Activated CD4-positive, alpha-beta T cell treated with anti-CD3 and anti-CD28 coated beads for 36 hours (primary cell): ENCODE measurements at regions of chr7 and their contacts with region 1.

Region 1: DNA sequence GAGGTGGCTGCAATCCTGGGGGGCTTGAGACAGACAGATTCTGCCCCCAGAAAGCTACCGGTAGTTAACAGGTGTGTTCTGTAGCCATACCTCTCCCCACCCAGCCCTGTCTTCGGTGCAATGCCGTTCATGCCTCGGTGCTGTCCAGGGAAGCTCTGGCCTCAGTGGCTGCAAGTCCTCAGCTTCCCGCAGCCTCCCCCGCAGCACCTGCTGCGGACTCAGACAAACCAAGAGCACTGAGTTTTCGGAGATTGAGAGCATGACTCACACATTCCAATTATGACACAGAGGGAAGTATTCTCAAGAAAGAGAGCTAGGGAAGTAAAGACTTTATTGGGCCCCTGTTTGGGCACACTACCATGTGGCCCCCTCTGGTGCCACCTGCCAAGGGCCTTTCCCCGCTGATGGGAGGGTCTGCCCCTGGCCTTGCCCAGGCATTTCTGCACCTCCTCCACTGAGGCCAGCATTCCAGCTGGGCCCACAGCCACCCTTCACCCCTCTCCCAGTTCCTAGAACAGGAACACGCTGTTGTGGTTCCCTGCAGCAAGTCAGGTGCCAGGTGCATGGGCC is 30.2 kb upstream of the EZH2 start:
- DNase-seq: peak; percentile 82
- ATAC-seq: peak; percentile 62
- H3K4me3 Mint-ChIP-seq: peak overlapping the region; percentile 47
- H3K27ac Mint-ChIP-seq: peak overlapping the region; percentile 98
- H3K4me1 Mint-ChIP-seq: peaks cover 73% of the 10 kb centered on the region
- H3K27me3 Mint-ChIP-seq: no peaks in the 10 kb centered on the region

Region 2: GRCh38 chr7:148856891-148857290 is 57.4 kb before region 1 on chr7:
- CTCF ChIA-PET with region 1: interaction called, 10 read pairs
- POLR2A ChIA-PET with region 1: interaction called, 7 read pairs
- intact Hi-C with region 1: loop called in 1 of 2 experiments (anchors 1 kb)
- DNase-seq: peak; percentile 45
- ATAC-seq: peak; percentile 87
- H3K4me3 Mint-ChIP-seq: peak overlapping the region; percentile 9
- H3K27ac Mint-ChIP-seq: peak overlapping the region; percentile 59
- H3K4me1 Mint-ChIP-seq: peaks cover 42% of the 10 kb centered on the region
- H3K27me3 Mint-ChIP-seq: no peaks in the 10 kb centered on the region

Region 3: GRCh38 chr7:148925836-148926235 is 11.5 kb after region 1 on chr7:
- CTCF ChIA-PET with region 1: interaction called, 6 read pairs
- POLR2A ChIA-PET with region 1: no interaction called
- intact Hi-C with region 1: loop called (anchors 1 kb)
- DNase-seq: no peak
- ATAC-seq: no peak
- H3K4me3 Mint-ChIP-seq: no peak overlapping the region
- H3K27ac Mint-ChIP-seq: peak overlapping the region; percentile 91
- H3K4me1 Mint-ChIP-seq: peaks cover 59% of the 10 kb centered on the region
- H3K27me3 Mint-ChIP-seq: no peaks in the 10 kb centered on the region

Region 4: DNA sequence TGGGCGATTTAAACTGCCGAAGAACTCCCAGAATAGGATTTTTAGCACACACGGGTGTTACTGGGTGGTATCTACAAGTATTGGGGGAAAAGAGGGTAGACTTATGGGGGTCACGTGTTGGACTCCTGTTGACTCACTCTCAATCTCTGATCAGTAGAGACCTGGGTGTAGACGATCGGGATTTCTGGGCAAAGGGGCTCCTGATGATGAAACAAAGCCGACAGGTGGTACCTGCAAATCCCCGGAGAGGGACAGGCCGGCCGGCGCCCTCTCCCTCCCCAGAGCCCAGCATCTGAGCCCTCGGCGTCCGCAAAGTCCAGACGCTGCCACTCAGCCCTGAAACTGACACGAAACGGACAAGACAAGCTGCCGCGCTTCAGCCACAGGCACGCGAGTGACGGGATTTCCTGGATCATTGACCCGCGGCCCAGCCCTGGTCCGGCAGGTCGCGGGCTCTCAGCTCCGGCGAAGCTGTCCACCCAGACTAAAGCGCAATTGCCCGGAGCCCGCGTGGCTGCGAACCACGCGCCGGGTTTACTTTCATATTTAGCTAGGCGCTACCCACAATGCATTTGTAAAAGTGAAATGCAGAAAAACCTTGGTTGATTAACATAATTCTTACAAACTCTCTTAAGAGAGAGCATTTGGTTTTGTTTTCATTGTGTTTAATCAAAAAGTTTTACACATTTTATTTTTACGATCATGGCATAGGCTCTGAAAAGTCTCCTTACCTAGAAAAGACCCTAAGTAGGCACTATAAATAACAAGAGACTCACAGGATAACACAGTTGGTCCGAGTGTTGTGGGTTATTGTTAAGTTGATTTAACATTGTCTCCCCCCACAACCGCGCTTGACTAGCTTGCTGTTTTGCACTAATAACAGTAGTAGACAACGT is 26.7 kb after region 1 on chr7:
- CTCF ChIA-PET with region 1: interaction called, 31 read pairs
- POLR2A ChIA-PET with region 1: interaction called, 39 read pairs
- intact Hi-C with region 1: loop called (anchors 1 kb)
- DNase-seq: peak; percentile 78
- ATAC-seq: peak; percentile 68
- H3K4me3 Mint-ChIP-seq: peak overlapping the region; percentile 98
- H3K27ac Mint-ChIP-seq: peak overlapping the region; percentile 100
- H3K4me1 Mint-ChIP-seq: peaks cover 16% of the 10 kb centered on the region
- H3K27me3 Mint-ChIP-seq: no peaks in the 10 kb centered on the region

Region 5: GRCh38 chr7:148987010-148987750 is 72.9 kb after region 1 on chr7:
- CTCF ChIA-PET with region 1: no interaction called
- POLR2A ChIA-PET with region 1: interaction called, 4 read pairs
- intact Hi-C with region 1: loop called in 1 of 2 experiments (anchors 2 kb)
- DNase-seq: peak; percentile 88
- ATAC-seq: peak; percentile 84
- H3K4me3 Mint-ChIP-seq: peak overlapping the region; percentile 90
- H3K27ac Mint-ChIP-seq: peak overlapping the region; percentile 97
- H3K4me1 Mint-ChIP-seq: peaks cover 40% of the 10 kb centered on the region
- H3K27me3 Mint-ChIP-seq: peaks cover 2% of the 10 kb centered on the region

Region 6: DNA sequence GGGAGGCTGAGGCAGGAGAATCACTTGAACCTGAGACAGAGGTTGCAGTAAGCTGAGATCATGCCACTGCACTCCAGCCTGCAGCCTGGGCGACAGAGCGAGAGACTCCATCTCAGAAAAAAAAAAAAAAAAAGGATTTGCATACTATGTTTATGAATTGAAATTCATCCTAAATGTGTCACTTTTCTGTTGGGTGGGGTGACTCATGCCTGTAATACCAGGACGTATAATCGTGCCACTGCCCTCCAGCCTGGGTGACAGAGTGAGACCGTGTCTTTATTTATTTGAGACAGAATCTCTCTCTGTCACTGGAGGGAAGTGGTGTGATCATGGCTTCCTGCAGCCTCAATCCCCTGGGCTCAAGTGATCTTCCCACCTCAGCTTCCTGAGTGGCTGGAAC is 331.0 kb after region 1 on chr7:
- CTCF ChIA-PET with region 1: no interaction called
- POLR2A ChIA-PET with region 1: no interaction called
- intact Hi-C with region 1: loop called in 1 of 2 experiments (anchors 5 kb)
- DNase-seq: peak; percentile 79
- ATAC-seq: peak; percentile 85
- H3K4me3 Mint-ChIP-seq: peak overlapping the region; percentile 48
- H3K27ac Mint-ChIP-seq: peak overlapping the region; percentile 96
- H3K4me1 Mint-ChIP-seq: peaks cover 72% of the 10 kb centered on the region
- H3K27me3 Mint-ChIP-seq: no peaks in the 10 kb centered on the region

Region 7: DNA sequence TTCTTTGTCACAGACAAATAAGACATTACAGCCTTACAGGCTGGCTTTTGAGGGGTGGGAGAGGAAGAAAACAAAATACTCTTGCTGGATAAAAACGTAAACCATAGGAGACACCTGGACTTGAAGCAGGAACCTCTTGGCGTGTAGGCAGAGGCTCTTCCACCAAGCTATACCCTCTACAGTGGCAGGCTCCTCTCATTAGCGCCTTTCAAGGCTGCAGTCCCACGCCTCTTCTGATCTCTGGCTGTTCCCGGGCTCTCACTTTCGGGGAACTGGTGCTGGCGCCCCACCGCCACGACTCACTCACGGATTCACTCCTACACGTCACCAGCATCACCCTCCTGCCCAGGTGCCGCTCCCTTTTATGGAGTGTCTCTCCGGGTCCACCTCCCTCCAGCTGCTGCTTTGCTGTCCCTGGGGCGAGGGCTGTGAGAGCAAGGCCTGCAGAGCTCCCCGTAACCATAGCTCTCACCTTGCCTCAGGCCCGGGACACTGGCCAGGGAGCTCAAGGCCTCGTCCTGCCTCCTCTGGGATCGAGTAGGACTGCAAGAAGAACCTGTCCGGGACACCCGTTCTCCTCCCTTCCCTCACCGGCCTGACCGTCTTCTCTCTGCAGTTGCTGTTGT is 484.0 kb after region 1 on chr7:
- CTCF ChIA-PET with region 1: no interaction called
- POLR2A ChIA-PET with region 1: no interaction called
- intact Hi-C with region 1: no loop called
- DNase-seq: no peak
- ATAC-seq: no peak
- H3K4me3 Mint-ChIP-seq: no peak overlapping the region
- H3K27ac Mint-ChIP-seq: no peak overlapping the region
- H3K4me1 Mint-ChIP-seq: no peaks in the 10 kb centered on the region
- H3K27me3 Mint-ChIP-seq: peaks cover 24% of the 10 kb centered on the region